AG04450 (cell line): ENCODE measurements at regions of chr19 and their contacts with region 1.

Region 1: GRCh38 chr19:42401365-42402303 is 11.5 kb upstream of the CNFN start:
- DNase-seq: peak; percentile 51
- H3K4me3 ChIP-seq: peak overlapping the region; percentile 66
- H3K27ac ChIP-seq: no peak overlapping the region
- H3K27me3 ChIP-seq: no peaks in the 10 kb centered on the region
- CTCF ChIP-seq: peak; percentile 85

Region 2: GRCh38 chr19:42412227-42412626 is 10.6 kb after region 1 on chr19:
- CTCF ChIA-PET with region 1: interaction called, 12 read pairs
- POLR2A ChIA-PET with region 1: no interaction called
- DNase-seq: no peak
- H3K4me3 ChIP-seq: no peak overlapping the region
- H3K27ac ChIP-seq: no peak overlapping the region
- H3K27me3 ChIP-seq: no peaks in the 10 kb centered on the region
- CTCF ChIP-seq: no peak